ENCODE measurements at regions of chr9 and their contacts with region 1.

Region 1: DNA sequence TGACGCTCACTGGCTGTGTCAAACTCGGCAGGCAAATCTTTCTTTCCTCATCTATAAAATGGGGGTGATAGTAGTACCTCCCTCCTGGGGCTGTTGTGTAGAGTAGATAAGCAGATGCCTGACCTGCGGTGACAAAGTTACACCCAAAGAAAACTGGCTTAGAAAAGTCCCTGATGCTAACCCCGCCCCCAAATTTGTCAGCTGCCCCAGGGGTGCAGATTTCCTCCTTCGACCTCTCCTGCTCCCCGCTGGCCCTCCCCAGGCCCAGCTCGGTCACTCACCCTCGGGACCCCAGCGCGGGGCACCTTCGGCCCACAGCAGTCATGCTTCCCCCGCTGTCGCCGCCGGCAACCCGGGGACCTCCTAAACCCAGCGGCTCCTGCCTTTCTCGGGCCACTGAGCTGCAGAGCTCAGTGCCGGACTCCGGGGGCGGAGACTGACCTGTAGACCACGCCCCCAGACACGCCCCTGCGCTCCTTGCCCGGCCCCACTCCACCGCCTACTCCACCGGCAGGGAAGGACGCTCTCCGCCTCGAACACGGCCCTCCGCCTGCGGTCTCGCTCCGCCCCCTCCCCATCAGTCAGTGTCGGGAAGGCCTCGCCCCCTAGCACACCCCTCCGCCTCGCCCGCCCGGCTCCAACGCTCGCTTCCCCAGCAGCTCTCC is 7.4 kb downstream of the SH2D3C start:
- DNase-seq: peak; percentile 99

Region 2: DNA sequence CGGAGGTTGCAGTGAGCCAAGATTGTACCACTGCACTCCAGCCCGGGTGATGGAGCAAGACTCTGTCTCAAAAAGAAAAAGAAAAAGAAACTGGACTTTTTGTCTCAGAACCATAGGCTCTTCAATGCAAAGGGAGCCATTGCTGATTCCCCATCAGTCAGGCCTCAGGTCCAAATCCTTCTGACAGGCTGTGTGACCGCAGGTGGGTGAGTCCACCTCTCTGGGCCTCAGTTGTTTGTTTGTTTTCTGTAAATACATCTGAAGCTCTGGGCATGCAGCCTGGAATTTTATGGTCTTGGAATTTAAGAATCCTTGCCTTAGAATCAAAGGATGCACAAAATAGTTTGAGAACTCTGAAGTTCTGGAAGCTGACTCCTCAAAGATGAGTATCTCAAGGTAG is 14.8 kb before region 1 on chr9:
- CTCF ChIA-PET with region 1: no interaction called
- POLR2A ChIA-PET with region 1: no interaction called
- DNase-seq: no peak

Region 3: GRCh38 chr9:127785023-127785932 is 14.2 kb after region 1 on chr9:
- CTCF ChIA-PET with region 1: interaction called, 10 read pairs
- POLR2A ChIA-PET with region 1: interaction called, 9 read pairs
- DNase-seq: peak; percentile 91

Measured in HEK293T (cell line).